ENCODE measurements at regions of chr1 and their contacts with region 1.

Region 1: DNA sequence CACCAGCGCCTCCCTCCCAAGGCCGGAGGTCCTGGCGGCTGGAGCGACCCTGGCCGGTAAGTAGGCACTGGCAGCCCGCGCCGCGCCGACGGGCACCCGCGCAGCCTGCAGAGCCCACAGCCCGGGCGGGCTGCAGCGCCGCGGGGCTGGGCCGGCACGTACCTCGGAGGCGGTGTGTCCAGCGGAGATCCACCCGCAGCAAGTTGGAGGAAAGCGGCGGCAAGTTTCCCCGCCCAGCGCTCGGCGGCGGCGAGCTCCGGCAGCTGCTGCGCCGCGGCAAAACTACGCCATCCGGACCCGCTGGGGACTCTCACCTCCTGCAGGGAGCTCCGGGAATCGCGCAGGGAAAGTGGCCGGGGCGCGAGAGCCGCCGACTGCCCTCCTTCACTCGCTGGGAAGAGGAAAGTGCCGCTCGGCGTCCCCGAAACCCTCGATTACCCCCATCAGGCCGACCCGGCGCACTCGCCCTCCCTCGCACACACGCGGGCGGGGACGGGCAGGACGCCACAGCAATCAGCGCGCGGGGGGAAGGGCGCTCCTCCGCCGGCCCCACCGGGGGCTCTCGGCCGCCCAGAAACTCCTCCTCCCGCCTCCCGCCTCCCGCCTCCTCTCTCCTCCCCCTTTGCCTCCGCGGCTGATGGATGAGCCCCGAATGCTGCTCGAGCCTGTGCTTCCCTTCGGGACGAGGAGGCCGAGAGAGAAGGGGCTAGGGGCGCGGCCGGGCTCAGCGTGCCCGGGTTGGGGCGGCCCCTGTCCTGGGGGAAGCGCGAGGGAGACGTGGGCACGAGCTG is at the start of gene TGFBR3:
- DNase-seq: peak; percentile 94
- total RNA-seq, gene TGFBR3: 12.6 TPM

Region 2: DNA sequence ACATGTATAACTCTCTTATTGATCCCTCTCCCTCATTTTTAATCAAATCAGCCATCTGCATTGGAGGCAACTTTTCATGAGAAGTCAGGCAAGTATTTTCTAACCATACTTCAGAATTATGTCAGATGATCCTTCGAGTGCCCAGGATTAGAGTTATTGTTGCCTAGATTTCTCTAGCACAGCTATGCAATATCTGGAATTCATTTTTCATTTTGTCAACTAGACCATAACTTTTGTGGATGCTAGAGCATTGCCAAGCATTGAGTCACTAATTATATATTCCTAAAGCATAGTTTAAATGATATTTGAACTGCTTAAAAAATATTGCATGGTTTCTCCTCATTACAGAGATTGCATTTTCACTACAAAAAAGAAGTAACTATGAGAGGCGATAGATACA is 502.5 kb before region 1 on chr1:
- intact Hi-C with region 1: no loop called
- DNase-seq: no peak

Region 3: GRCh38 chr1:91500756-91501522 is 385.0 kb before region 1 on chr1 and contains the start of gene CDC7:
- intact Hi-C with region 1: loop called (anchors 5 kb)
- DNase-seq: peak; percentile 95
- total RNA-seq, gene CDC7: 1.6 TPM

Region 4: GRCh38 chr1:91697416-91697815 is 188.5 kb before region 1 on chr1:
- intact Hi-C with region 1: loop called (anchors 10 kb)
- DNase-seq: no peak

Region 5: DNA sequence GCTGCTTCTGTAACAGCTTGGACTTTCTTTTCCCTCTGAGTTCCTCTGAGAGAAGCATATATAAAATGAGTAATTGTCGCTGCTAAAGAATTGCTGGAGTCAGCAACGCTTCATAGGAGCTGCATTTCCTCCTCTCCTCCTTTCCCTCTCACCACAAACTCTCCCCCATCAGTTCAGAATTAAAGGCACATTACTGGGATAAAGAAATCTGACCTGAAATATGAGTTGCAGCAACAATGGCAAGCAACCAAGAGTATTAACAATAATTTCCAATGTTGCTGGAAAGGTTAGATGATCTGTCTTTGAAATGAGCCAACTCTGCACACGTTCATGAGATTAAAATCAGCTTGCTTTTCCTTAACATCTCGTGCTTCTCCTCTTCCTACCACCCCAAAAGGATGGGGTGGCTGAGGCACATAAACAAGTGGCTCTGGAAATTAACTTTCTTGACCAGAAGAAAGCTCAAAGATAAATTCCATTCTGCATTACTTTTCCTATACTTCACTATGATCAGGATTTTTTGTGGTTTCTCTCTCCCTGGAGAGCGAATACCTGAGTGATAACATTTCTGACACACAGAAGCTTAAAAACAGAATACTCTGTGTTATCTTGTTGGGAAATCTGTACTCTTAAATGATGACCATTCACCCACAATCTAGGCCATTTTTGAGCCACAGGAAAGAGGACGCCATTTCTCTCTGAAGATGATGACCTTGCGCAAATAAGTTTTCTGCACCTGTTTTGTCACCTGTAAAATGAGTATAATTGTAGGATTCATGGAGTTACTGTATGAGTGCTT is 90.1 kb before region 1 on chr1:
- intact Hi-C with region 1: loop called (anchors 10 kb)
- DNase-seq: no peak

Region 6: GRCh38 chr1:91846007-91846617 is 39.8 kb before region 1 on chr1:
- intact Hi-C with region 1: loop called (anchors 5 kb)
- DNase-seq: no peak

Region 7: DNA sequence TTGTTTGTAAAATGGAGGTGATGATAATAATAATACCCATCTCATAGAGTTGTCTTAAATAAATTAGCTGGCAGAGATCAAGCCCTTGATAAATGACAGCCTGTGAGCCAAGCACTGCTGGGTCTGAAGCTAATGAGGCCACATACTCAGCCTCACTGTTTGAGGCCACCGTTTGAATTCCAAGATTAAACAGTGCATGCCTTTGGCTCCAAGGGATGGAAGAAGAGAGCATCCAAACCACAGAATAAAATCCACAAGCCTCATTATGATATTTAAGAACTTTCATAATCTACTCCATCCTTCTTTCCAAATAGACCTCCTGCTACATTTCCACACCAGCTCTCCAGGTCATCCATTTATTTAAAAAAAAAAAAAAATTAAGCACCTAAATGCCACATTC is 28.9 kb before region 1 on chr1:
- intact Hi-C with region 1: no loop called
- DNase-seq: no peak

Region 8: GRCh38 chr1:91913018-91913417 is 27.1 kb after region 1 on chr1:
- intact Hi-C with region 1: no loop called
- DNase-seq: no peak

Region 9: GRCh38 chr1:92004129-92004528 is 118.2 kb after region 1 on chr1:
- intact Hi-C with region 1: no loop called
- DNase-seq: no peak

Measured in cardiac septum (tissue), 1 donor.